HepG2 (cell line): ENCODE measurements at regions of chr4 and their contacts with region 1.

Region 1: DNA sequence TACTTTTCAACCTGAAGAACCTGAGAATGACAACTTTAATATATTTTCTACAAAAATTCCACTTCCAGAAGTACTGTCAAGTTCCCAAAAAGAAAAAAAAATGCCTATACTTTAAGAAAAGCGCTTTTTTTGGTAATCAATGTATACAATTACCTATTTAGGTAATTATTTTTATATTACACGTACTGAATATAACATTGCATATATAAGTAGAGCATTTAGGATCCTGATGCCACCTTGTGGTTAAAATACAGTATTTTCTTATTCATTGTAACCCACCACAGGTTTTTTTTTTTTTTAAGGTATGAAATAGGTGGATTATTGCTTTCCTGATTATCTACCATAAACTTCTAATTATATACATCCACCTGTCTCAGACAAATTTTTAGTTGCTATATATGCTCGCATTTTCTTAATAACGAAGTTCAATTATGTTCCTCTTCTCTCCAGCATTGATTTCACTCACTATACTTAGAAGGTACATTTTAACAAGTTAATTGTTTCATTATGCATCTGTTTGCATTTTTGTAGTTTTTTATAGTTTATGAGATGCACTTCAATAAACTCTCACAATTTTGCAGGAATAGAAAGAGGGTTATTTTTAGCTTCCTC is 5.2 kb downstream of the MAP9 start:
- DNase-seq: no peak
- ATAC-seq: 0 out of 3 replicates have a peak, but pooled peaks have one; percentile 40
- H3K4me3 ChIP-seq: no peak overlapping the region
- H3K27ac ChIP-seq: no peak overlapping the region
- H3K4me1 ChIP-seq: no peaks in the 10 kb centered on the region
- H3K27me3 ChIP-seq: no peaks in the 10 kb centered on the region
- CTCF ChIP-seq: 0 out of 2 replicates have a peak, but pooled peaks have one; percentile 10
- EP300 ChIP-seq: no peak
- POLR2A ChIP-seq: no peak
- RAD21 ChIP-seq: no peak

Region 2: GRCh38 chr4:154854362-154854761 is 517.2 kb before region 1 on chr4:
- CTCF ChIA-PET with region 1: no interaction called
- POLR2A ChIA-PET with region 1: no interaction called
- in situ Hi-C with region 1: no loop called
- intact Hi-C with region 1: loop called (anchors 5 kb)
- DNase-seq: peak; percentile 7
- ATAC-seq: no peak; the same call in 2 of the 3 replicates
- H3K4me3 ChIP-seq: no peak overlapping the region
- H3K27ac ChIP-seq: no peak overlapping the region
- H3K4me1 ChIP-seq: no peaks in the 10 kb centered on the region
- H3K27me3 ChIP-seq: no peaks in the 10 kb centered on the region
- CTCF ChIP-seq: peak; percentile 9; the same call in 1 of the 2 replicates
- EP300 ChIP-seq: no peak
- POLR2A ChIP-seq: no peak
- RAD21 ChIP-seq: no peak

Region 3: GRCh38 chr4:154982187-154983047 is 389.1 kb before region 1 on chr4:
- CTCF ChIA-PET with region 1: interaction called, 8 read pairs
- POLR2A ChIA-PET with region 1: no interaction called
- in situ Hi-C with region 1: no loop called
- intact Hi-C with region 1: loop called (anchors 1 kb)
- DNase-seq: peak; percentile 32
- ATAC-seq: peak; percentile 93
- H3K4me3 ChIP-seq: no peak overlapping the region
- H3K27ac ChIP-seq: no peak overlapping the region
- H3K4me1 ChIP-seq: no peaks in the 10 kb centered on the region
- H3K27me3 ChIP-seq: no peaks in the 10 kb centered on the region
- CTCF ChIP-seq: peak; percentile 83
- EP300 ChIP-seq: no peak
- POLR2A ChIP-seq: no peak
- RAD21 ChIP-seq: peak; percentile 41

Region 4: DNA sequence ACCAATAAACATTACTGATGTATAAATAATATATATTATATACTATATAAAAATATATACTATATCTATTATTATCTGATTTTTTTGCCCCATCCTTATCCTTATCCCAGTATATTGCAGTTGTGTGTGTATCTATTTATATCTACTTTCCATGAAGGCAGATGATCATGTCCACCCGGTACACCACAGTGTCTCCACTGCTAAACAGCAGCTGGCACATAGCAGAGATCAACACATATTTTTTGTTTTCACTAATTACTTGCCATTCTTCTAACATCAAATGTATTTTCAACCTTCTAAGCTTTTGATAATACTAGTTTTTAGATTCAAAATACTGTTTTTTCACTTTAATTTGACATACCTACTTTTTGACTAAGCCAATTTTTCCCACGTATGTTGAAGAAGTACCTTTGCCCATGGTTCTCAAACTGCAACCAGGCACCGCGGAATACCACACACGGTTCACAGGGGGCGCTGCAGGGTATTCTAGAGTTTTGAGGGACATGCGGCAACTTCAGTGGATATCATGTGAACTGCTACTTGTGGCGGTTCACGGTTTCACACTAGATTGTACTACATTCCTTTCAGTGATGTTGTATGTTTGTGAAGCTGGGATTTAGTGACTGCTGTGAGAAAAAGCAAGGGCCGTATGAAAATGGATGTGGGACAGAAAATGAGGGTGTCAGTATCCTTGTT is 345.6 kb before region 1 on chr4:
- CTCF ChIA-PET with region 1: interaction called, 3 read pairs
- POLR2A ChIA-PET with region 1: no interaction called
- in situ Hi-C with region 1: no loop called
- intact Hi-C with region 1: loop called (anchors 5 kb)
- DNase-seq: peak; percentile 48
- ATAC-seq: peak; percentile 95
- H3K4me3 ChIP-seq: no peak overlapping the region
- H3K27ac ChIP-seq: no peak overlapping the region
- H3K4me1 ChIP-seq: no peaks in the 10 kb centered on the region
- H3K27me3 ChIP-seq: no peaks in the 10 kb centered on the region
- CTCF ChIP-seq: peak; percentile 59
- EP300 ChIP-seq: no peak
- POLR2A ChIP-seq: no peak
- RAD21 ChIP-seq: peak; percentile 44; the same call in 1 of the 2 replicates

Region 5: DNA sequence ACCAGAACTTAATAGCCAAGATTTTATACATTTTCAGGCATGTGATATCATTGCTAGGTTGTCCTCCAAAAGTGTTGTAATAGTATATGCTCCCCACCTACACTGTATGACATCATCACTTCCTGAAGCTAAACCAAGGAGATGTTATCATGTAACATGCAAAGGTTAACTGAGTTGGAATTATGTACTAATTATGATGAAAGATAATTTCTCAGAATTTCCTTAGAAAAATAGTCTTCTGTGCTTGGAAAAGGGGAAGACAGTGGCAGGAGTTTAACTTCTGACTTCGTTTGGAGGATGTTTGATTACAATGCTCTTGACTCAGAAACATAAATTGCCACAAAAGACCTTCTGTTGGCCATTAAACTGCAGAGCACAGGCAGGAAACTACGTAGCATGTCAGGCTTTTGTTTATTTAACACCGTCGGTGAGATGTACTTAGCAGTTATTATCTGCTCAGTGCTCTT is 211.5 kb after region 1 on chr4:
- CTCF ChIA-PET with region 1: no interaction called
- POLR2A ChIA-PET with region 1: no interaction called
- in situ Hi-C with region 1: no loop called
- intact Hi-C with region 1: no loop called
- DNase-seq: no peak
- ATAC-seq: no peak
- H3K4me3 ChIP-seq: no peak overlapping the region
- H3K27ac ChIP-seq: no peak overlapping the region
- H3K4me1 ChIP-seq: no peaks in the 10 kb centered on the region
- H3K27me3 ChIP-seq: no peaks in the 10 kb centered on the region
- CTCF ChIP-seq: no peak
- EP300 ChIP-seq: no peak
- POLR2A ChIP-seq: no peak
- RAD21 ChIP-seq: no peak